ENCODE measurements at regions of chr3 and their contacts with region 1.

Region 1: GRCh38 chr3:43389388-43390254 is 103.3 kb downstream of the SNRK start:
- DNase-seq: no peak
- H3K4me3 ChIP-seq: no peak overlapping the region
- H3K27ac ChIP-seq: no peak overlapping the region
- H3K4me1 ChIP-seq: peaks cover 3 to 7% (median 4%) of the 10 kb centered on the region in 4 experiments; a peak in 6 of 7 replicates
- H3K27me3 ChIP-seq: no peaks in the 10 kb centered on the region
- CTCF ChIP-seq: no peak
- EP300 ChIP-seq: no peak
- POLR2A ChIP-seq: no peak
- RAD21 ChIP-seq: no peak

Region 2: DNA sequence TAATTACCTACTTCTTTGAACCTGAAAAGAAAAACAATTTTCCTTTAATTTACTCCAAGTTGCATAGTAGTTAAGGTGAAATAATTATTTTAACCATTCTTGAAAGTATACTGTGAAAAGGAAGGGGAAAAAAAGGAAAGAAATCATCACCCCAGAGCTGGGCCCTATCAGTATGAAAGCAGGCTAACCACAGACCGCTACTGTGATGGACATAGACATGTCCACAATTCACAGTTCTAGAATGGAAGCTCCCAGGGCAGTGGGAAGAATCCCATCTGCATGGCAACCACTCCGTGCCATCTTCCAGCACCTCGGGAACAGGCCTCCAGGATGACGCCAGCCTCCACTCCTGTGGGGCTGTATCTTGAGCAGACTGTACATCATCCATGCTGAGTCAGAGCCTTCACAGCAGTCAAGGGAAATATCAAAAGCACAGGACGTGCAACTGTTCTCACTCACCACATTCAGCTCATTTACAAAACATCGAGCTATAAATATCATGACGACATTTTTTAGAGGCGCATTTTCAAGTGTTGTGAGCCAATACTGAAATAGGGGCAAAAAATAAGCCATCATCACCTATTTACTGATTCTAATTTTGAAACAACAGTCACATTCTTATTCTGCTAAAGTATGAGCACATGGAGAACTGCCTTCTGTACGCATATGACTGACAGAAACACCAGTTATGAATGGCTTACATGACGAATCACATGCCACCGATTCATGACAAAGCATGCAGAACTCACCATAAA is 16.4 kb after region 1 on chr3:
- CTCF ChIA-PET with region 1: interaction called, 10 read pairs
- POLR2A ChIA-PET with region 1: interaction called, 3 read pairs
- DNase-seq: no peak
- H3K4me3 ChIP-seq: no peak overlapping the region
- H3K27ac ChIP-seq: no peak overlapping the region
- H3K4me1 ChIP-seq: no peaks in the 10 kb centered on the region
- H3K27me3 ChIP-seq: no peaks in the 10 kb centered on the region
- CTCF ChIP-seq: no peak
- EP300 ChIP-seq: no peak
- POLR2A ChIP-seq: no peak
- RAD21 ChIP-seq: no peak

Region 3: DNA sequence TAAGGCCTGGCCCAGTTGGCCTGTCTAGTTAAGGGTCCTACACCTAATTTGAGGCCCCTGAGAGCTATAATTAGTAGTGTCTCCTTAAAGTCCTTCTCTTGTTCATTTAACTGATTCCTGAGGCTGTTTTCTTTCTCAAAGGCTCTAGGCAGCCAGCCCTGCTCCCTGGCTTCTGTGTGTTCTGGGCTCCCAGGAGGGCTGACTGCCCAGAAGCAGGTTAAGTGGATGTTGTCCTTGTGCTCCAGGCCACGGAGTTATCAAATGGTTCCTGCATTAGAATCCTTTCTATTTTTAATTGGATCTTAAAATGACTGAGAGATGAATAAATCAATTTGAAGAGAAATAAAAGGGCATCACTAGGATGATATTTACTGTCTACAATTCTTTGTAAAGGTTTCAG is 36.8 kb after region 1 on chr3:
- CTCF ChIA-PET with region 1: no interaction called
- POLR2A ChIA-PET with region 1: no interaction called
- DNase-seq: no peak
- H3K4me3 ChIP-seq: no peak overlapping the region
- H3K27ac ChIP-seq: no peak overlapping the region
- H3K4me1 ChIP-seq: peaks cover 0 to 7% (median 0%) of the 10 kb centered on the region in 4 experiments; a peak in 2 of 7 replicates
- H3K27me3 ChIP-seq: no peaks in the 10 kb centered on the region
- CTCF ChIP-seq: no peak
- EP300 ChIP-seq: no peak
- POLR2A ChIP-seq: no peak
- RAD21 ChIP-seq: no peak

Measured in H1 (cell line).